K562 (cell line): ENCODE measurements at regions of chr19 and their contacts with region 1.

Region 1: GRCh38 chr19:46529622-46530462 is 34.2 kb upstream of the PNMA8B start:
- DNase-seq: peak; percentile 73 to 82 (median 74)
- ATAC-seq: peak; percentile 79
- H3K4me3 ChIP-seq: no peak overlapping the region
- H3K27ac ChIP-seq: no peak overlapping the region
- H3K4me1 ChIP-seq: peaks cover 8 to 14% of the 10 kb centered on the region in 2 experiments; a peak in 2 of 5 replicates
- H3K27me3 ChIP-seq: peaks cover 6 to 28% of the 10 kb centered on the region in 2 experiments; a peak in 3 of 5 replicates
- CTCF ChIP-seq: peak; percentile 84 to 97 (median 95)
- EP300 ChIP-seq: no peak
- POLR2A ChIP-seq: no peak
- RAD21 ChIP-seq: peak; percentile 89 to 94

Region 2: DNA sequence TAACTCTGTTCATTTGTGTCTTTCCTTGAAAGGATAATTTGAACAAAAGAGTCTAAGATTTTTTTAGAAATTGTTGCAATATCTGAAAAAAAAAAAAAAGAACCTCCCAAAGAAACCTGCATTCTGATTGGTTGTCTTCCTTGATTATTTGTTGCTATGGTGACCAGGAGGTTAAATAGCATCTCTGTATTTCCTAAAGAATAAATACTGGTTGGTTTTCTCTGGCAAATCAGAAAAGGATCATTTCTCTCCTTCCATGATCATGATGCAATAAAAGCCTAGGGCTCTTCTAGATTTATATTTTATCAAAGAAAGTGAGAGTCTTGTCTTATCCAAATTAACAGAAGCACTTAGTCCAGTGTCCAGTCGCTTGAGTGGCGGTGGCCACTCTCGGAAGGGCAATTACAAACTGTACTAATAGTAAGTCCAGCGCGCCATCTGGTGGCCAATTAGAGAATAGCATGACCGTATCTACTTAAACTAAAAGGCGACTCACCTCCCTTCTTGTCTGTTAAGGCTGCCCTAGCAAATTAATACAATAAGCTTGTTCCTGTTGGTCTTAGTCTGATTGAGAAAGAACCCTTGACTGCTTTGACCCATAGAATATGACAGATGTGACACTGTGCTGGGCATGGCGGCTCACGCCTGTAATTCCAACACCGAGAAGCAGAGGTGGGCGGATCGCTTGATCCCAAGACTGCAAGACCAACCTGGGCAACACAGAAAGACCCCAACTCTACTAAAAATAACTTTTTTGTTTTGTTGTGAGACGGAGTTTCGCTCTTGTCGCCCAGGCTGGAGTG is 12.8 kb after region 1 on chr19:
- CTCF ChIA-PET with region 1: interaction called, 36 read pairs
- POLR2A ChIA-PET with region 1: interaction called, 7 read pairs
- in situ Hi-C with region 1: no loop called
- intact Hi-C with region 1: loop called (anchors 1 kb)
- DNase-seq: peak; percentile 74 to 91 (median 75)
- ATAC-seq: peak; percentile 92
- H3K4me3 ChIP-seq: no peak overlapping the region
- H3K27ac ChIP-seq: no peak overlapping the region
- H3K4me1 ChIP-seq: no peaks in the 10 kb centered on the region; a peak in 2 of 5 replicates
- H3K27me3 ChIP-seq: peaks cover 7 to 8% of the 10 kb centered on the region in 2 experiments; a peak in 4 of 5 replicates
- CTCF ChIP-seq: peak; percentile 84 to 96 (median 86)
- EP300 ChIP-seq: no peak
- POLR2A ChIP-seq: no peak
- RAD21 ChIP-seq: peak; percentile 68 to 85

Region 3: DNA sequence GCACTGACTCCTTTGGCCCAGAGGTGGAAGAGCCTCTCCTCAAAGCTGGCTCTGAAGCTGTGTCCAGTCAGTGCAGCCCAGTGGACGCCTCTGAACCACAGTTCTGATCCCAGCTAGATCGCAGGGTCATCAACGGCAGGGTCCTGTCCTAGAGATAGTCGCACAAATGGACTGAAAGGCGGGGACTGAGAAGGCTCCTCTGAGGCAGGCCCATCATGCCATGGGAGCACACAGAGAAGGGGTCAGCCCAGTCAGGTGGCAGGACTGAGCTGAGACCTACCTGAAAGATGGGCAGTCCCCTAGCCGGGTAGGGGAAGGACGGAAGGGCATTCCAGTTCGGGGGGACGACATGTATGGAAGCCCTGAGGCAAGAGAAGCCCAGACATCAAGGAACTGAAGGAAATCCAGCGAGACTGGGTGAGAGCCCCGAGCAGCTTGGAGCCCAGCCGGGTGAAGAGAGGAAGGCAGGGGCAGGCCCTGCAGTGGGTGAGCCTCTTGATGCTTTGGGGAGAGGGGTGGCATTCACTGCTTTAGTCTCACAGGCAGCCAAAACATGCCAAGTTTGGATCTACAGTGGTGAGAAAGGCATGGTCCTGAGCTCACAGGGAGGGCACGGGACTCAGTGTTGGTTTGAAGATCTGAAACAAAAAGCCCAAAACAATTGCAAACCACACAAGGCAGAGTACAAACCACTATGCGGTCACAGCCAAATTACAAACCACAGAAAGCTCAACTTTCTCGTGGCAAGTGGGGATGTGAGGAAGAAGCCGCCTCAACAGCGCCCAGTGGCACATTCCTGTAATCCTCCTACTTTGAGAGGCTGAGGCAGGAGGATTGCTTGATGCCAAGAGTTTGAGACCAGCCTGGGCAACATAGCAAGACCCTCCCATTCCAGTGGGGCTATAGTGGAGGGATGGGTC is 81.3 kb after region 1 on chr19:
- CTCF ChIA-PET with region 1: no interaction called
- POLR2A ChIA-PET with region 1: no interaction called
- in situ Hi-C with region 1: no loop called
- intact Hi-C with region 1: no loop called
- DNase-seq: no peak
- ATAC-seq: peak; percentile 47
- H3K4me3 ChIP-seq: no peak overlapping the region
- H3K27ac ChIP-seq: no peak overlapping the region
- H3K4me1 ChIP-seq: peaks cover 0 to 10% of the 10 kb centered on the region in 2 experiments; a peak in 1 of 5 replicates
- H3K27me3 ChIP-seq: no peaks in the 10 kb centered on the region
- CTCF ChIP-seq: no peak
- EP300 ChIP-seq: no peak
- POLR2A ChIP-seq: peak; percentile 74
- RAD21 ChIP-seq: no peak

Region 4: GRCh38 chr19:46668662-46669061 is 138.8 kb after region 1 on chr19:
- CTCF ChIA-PET with region 1: interaction called, 3 read pairs
- POLR2A ChIA-PET with region 1: no interaction called
- in situ Hi-C with region 1: loop called (anchors 5 kb)
- intact Hi-C with region 1: no loop called
- DNase-seq: no peak
- ATAC-seq: no peak
- H3K4me3 ChIP-seq: no peak overlapping the region
- H3K27ac ChIP-seq: no peak overlapping the region
- H3K4me1 ChIP-seq: peaks cover 0 to 4% of the 10 kb centered on the region in 2 experiments; a peak in 2 of 5 replicates
- H3K27me3 ChIP-seq: no peaks in the 10 kb centered on the region
- CTCF ChIP-seq: no peak
- EP300 ChIP-seq: no peak
- POLR2A ChIP-seq: no peak
- RAD21 ChIP-seq: no peak